ENCODE measurements at regions of chr10 and their contacts with region 1.

Region 1: GRCh38 chr10:89431977-89432376 is 17.6 kb downstream of the IFIT5 start:
- DNase-seq: peak; percentile 67
- H3K4me3 Mint-ChIP-seq: peak overlapping the region; percentile 19
- H3K27ac Mint-ChIP-seq: no peak overlapping the region
- H3K4me1 Mint-ChIP-seq: peaks cover 26% of the 10 kb centered on the region
- H3K27me3 Mint-ChIP-seq: no peaks in the 10 kb centered on the region
- CTCF ChIP-seq: no peak

Region 2: GRCh38 chr10:89458291-89458690 is 26.3 kb after region 1 on chr10:
- CTCF ChIA-PET with region 1: no interaction called
- POLR2A ChIA-PET with region 1: interaction called, 23 read pairs
- intact Hi-C with region 1: no loop called
- DNase-seq: peak; percentile 53
- H3K4me3 Mint-ChIP-seq: no peak overlapping the region
- H3K27ac Mint-ChIP-seq: peak overlapping the region; percentile 37
- H3K4me1 Mint-ChIP-seq: peaks cover 27% of the 10 kb centered on the region
- H3K27me3 Mint-ChIP-seq: no peaks in the 10 kb centered on the region
- CTCF ChIP-seq: no peak

Region 3: GRCh38 chr10:90096196-90096595 is 664.2 kb after region 1 on chr10:
- CTCF ChIA-PET with region 1: no interaction called
- POLR2A ChIA-PET with region 1: no interaction called
- intact Hi-C with region 1: no loop called
- DNase-seq: no peak
- H3K4me3 Mint-ChIP-seq: no peak overlapping the region
- H3K27ac Mint-ChIP-seq: no peak overlapping the region
- H3K4me1 Mint-ChIP-seq: no peaks in the 10 kb centered on the region
- H3K27me3 Mint-ChIP-seq: no peaks in the 10 kb centered on the region
- CTCF ChIP-seq: no peak

Measured in MCF 10A (cell line).